ENCODE measurements at regions of chr5 and their contacts with region 1.

Region 1: DNA sequence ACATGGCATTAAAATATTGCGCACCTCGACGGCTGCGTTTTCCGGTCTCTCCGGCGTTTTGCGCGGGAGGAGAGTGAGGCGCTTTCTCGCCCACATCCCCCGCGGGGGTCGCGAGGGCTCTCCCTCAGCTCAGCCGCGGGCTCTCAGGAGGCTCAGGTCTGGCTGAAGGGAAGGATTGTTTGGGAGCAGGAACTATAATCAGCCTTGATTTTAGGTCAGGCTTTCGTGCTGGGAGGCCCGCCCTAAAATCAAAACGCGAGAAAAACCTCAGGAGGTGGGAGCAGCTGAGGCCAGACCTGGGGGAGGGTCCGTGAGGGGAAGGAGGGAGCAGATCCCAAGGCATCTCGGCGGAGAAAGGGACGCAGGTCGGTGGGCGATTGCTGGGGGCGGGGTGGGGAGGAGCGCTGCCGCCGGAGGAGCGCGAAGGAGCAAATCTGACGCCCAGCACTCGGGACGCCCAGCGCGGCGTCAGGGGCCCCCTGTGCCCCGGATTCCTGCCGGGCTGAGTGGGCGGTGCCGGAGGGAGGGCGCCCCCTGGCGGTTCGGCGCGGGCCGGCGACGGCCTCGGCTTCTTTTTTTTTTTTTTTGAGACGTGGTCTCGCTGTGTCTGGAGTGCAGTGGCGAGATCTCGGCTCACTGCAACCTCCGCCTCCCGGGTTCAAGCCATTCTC is 18.7 kb upstream of the RNF130 start:
- DNase-seq: peak; percentile 85
- ATAC-seq: peak; percentile 92

Region 2: DNA sequence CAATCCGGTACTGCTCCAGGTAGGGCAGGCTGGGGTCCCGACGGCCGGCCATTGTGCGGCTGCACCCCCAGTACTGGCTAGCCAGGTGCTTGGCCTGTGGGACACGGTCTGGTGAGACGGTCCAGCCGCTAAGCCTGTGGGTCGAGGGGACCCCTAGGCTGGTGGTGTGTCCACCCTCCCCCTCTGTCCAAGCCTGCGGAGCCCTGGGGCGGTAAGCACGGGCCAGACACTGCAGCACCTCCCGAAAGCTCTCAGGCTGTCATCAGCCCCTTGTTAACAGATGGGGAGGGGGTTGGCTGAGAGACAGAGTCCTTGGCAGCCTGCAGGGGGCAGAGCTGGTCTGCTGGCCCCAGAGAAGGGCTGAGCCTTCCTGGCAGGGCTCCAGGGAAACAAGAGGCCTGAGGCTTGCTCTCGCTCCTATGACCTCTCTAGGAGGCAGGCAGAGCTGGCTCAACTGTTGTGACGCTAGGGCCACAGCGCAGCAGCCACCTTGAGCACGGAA is 219.8 kb before region 1 on chr5:
- intact Hi-C with region 1: loop called (anchors 5 kb)
- DNase-seq: peak; percentile 82
- ATAC-seq: peak; percentile 72

Region 3: DNA sequence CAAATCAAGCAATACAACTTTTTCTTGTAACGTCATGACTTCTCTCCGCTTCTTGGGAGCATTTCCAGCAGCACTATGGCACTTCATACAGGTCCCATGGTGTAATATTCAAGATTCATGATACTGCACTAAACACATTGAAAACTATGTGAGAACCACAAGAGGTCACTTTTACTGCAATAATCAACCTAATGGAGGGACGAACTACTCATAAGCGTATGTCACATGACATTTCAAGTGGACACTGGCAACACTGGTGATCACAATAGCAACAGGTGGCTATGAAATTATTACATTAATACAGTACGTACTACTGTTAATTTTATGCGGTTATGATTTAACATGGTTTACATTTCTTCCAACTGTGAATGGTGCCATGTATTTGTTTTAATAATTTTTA is 103.9 kb before region 1 on chr5:
- intact Hi-C with region 1: loop called (anchors 1 kb)
- DNase-seq: no peak
- ATAC-seq: peak; percentile 76